ENCODE measurements at regions of chr4 and their contacts with region 1.

Region 1: DNA sequence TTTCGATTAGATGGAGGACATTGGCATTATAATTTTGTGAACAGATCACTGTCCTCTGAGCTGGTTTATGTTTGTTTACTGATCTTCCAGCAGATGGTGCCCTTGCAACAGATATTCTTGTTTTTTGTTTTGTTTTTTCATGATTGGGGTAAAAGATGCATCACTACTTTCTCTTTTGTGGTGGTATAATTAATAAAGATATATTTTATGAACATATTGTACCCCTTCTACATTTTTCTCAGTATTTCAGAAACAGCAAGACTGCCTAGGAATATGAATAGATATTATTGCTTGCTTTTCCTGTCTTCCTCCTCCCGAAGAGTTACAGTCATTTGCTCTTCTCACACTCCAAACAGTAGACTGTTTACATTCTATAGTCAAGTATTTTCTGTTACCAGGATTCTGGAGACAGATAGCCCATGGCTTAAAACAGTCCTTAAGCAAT is 905.2 kb downstream of the TRAM1L1 start:
- DNase-seq: peak; percentile 46
- H3K4me3 Mint-ChIP-seq: no peak overlapping the region
- H3K27ac Mint-ChIP-seq: no peak overlapping the region
- H3K4me1 Mint-ChIP-seq: no peaks in the 10 kb centered on the region
- H3K27me3 Mint-ChIP-seq: peaks cover 15% of the 10 kb centered on the region
- CTCF ChIP-seq: peak; percentile 52

Region 2: DNA sequence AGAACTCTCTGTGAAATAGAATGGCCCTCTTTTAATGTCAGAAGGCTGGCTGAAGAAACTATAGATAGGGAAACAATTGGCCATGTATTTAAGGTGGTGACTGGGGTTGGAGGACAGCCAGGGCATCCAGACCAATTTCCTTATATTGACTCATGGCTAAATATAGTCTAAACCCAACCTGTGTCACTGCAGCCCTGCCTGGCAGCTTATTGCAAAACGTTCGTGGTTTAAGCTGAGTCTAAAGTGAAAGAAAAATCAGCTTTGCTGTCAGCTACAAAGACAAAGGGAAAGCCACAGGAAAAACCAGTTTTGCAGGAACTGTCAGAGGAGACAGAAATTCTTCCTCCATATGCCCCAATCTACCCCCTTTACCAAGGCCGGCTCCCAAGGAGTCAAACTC is 164.0 kb before region 1 on chr4:
- CTCF ChIA-PET with region 1: no interaction called
- POLR2A ChIA-PET with region 1: no interaction called
- intact Hi-C with region 1: no loop called
- DNase-seq: peak; percentile 64
- H3K4me3 Mint-ChIP-seq: peak overlapping the region; percentile 50
- H3K27ac Mint-ChIP-seq: peak overlapping the region; percentile 69
- H3K4me1 Mint-ChIP-seq: peaks cover 13% of the 10 kb centered on the region
- H3K27me3 Mint-ChIP-seq: no peaks in the 10 kb centered on the region
- CTCF ChIP-seq: no peak

Region 3: GRCh38 chr4:116055857-116056827 is 124.0 kb before region 1 on chr4:
- CTCF ChIA-PET with region 1: interaction called, 3 read pairs
- POLR2A ChIA-PET with region 1: no interaction called
- intact Hi-C with region 1: loop called (anchors 5 kb)
- DNase-seq: peak; percentile 36
- H3K4me3 Mint-ChIP-seq: no peak overlapping the region
- H3K27ac Mint-ChIP-seq: no peak overlapping the region
- H3K4me1 Mint-ChIP-seq: no peaks in the 10 kb centered on the region
- H3K27me3 Mint-ChIP-seq: no peaks in the 10 kb centered on the region
- CTCF ChIP-seq: peak; percentile 44

Region 4: DNA sequence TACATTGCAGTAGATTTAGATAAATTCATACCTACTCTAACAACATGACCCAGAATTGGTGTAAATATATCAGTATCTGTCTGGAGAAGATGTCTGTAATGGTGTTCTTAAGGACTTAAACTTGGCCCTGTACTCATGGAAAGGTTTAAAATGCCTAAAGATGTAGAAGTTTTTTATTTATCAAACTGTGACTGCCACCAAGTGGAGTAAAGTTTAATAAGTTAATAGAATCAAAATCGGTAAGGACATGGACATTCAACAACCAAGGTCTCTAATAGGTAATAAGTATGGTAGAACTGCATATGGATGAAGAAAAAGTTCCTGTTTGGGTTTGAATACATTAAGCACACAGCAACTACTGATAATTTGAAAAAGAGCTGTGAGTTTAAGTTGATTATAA is 1380.2 kb after region 1 on chr4:
- CTCF ChIA-PET with region 1: no interaction called
- POLR2A ChIA-PET with region 1: no interaction called
- intact Hi-C with region 1: loop called (anchors 1 kb)
- DNase-seq: peak; percentile 45
- H3K4me3 Mint-ChIP-seq: no peak overlapping the region
- H3K27ac Mint-ChIP-seq: no peak overlapping the region
- H3K4me1 Mint-ChIP-seq: no peaks in the 10 kb centered on the region
- H3K27me3 Mint-ChIP-seq: no peaks in the 10 kb centered on the region
- CTCF ChIP-seq: peak; percentile 18